Adrenal gland (tissue), 19 donors: ENCODE measurements at regions of chr2 and their contacts with region 1.

Region 1: GRCh38 chr2:117771969-117772630 is 42.4 kb upstream of the DDX18 start:
- DNase-seq: no peak
- H3K4me3 ChIP-seq: no peak overlapping the region
- H3K27ac ChIP-seq: no peak overlapping the region
- H3K4me1 ChIP-seq: no peaks in the 10 kb centered on the region
- H3K27me3 ChIP-seq: no peaks in the 10 kb centered on the region
- CTCF ChIP-seq: peak in 4 of 6 experiments; percentile 11 to 51 (median 35)
- POLR2A ChIP-seq: no peak

Region 2: DNA sequence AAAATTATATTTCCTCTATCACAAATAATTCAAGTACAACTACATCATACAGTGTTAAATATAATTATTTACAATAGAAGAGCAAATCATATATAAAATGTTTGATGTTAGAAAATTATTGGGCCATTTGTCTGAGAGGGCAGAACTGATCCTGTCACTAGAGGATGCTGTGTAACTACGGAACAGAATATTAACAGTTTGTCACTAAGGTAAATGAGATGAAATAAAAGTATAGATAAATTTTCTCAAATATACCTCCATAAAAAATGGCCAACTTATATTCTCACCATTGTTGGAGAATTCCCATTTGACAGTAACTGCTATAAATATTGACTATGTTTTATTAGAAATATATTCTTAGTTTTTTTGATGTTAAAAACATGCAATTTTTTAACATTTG is 1025.0 kb before region 1 on chr2:
- intact Hi-C with region 1: no loop called
- DNase-seq: no peak
- H3K4me3 ChIP-seq: no peak overlapping the region
- H3K27ac ChIP-seq: no peak overlapping the region
- H3K4me1 ChIP-seq: no peaks in the 10 kb centered on the region
- H3K27me3 ChIP-seq: no peaks in the 10 kb centered on the region
- CTCF ChIP-seq: no peak
- POLR2A ChIP-seq: no peak

Region 3: DNA sequence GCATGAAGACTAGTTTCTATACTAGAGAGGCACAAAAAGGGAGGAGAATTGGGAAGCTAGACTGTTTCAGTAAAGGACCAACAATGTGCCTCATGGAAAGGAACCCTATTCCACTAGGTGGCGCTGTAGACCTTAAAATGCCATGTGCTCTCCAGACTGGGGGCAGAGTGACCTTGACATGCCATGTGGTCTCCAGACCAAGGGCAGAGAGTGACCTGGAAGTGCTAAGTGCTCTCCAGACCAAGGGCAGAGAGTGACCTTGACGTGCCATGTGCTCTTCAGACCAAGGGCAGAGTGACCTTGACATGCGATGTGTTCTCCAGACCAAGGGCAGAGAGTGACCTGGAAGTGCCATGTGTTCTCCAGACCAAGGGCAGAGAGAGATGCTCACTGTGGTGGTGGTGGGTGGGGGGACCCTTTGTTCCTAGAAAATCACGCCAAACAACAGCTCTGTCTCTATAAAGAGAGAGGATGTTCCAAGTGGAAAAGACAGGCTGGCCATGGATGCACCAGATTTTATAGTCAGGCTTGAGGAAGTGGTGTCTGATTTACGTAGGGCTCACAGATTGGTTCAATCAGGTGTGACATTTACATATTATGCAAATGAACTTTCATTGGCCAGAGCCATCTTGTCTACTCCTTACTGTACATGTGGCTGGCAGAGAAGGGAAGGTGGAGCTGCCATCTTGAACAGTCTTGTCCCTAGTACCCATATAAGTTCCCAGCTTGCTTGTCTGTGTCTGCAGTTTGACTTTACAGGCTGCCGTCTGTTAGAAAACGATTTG is 301.6 kb before region 1 on chr2:
- intact Hi-C with region 1: loop called in 1 of 2 experiments (anchors 10 kb)
- DNase-seq: peak; percentile 11 to 75 (median 42)
- H3K4me3 ChIP-seq: no peak overlapping the region
- H3K27ac ChIP-seq: no peak overlapping the region
- H3K4me1 ChIP-seq: no peaks in the 10 kb centered on the region
- H3K27me3 ChIP-seq: no peaks in the 10 kb centered on the region
- CTCF ChIP-seq: peak in 5 of 6 experiments; percentile 51 to 70 (median 53)
- POLR2A ChIP-seq: no peak